ENCODE measurements at regions of chr17 and their contacts with region 1.

Region 1: DNA sequence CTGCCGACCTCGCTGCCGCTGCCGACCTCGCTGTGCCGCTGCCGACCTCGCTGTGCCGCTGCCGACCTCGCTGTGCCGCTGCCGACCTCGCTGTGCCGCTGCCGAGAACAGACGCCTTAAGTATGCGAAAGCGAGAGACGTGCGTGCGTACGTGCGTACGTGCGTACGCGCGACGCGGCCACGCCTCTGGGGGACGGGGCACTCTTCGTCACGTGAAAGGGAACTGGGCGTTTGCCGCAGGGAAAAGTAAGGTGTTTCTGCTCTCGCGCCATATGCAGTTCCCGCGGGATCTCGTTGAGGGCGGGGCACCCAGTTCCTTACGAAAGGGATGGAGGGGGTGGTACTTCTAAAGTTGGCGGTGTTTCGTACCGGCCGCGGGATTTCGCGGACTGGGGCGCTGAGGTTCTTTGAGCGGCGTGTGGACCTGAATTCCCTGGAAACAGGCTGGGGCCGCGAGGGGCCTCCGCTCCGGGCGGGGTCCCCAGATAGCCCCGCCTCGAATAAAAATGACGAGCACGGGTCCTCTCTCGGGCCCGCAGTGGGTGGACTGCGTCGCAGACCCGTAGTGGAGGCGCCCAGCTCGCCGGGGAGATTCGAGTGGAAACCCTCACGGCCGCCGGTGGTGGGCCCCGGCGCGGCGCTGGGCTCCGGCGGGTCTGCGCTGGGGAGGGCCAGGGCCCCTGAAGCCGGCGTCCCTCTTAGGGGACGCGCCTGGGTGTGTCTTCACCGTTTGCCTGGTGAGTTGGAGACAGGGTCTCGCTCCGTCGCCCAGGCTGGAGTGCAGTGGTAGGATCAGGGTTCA is at the start of gene EIF4A3:
- DNase-seq: peak; percentile 99
- CTCF ChIP-seq: peak; percentile 14

Region 2: DNA sequence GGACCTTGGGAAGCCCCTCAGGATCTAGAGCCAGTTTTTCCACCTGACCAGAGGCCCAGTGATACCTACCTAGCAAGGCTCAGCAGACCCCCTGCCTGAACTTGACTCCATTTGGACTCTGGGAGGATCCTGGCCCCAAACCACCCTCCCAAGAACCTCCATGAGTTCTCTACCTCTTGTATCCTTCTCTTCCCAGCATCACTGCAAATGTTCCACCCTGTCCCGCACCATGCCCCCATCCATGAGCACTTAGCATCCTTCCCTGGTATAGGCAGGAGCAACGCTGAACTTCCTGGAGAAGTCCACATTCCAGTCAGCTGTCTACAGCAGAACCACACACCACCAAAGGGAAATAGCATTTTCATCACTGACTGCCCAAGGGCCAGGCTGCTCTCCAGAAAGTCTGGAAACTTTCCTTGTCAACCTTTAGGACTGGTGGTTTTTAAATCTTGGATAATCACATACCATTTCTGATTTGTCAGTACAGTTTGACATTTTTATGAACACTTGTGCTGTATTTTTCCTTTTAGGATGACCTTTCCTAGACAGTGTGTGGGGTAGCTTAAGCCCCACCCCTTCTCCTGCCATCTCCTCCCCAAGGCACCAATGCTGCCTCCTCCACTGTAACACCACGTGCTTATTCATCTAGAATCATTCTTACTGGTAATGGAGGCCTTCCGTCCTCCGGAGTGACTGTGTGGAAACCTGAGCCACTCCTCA is 14.2 kb before region 1 on chr17:
- CTCF ChIA-PET with region 1: interaction called, 3 read pairs
- POLR2A ChIA-PET with region 1: interaction called, 13 read pairs
- DNase-seq: no peak
- CTCF ChIP-seq: no peak

Region 3: DNA sequence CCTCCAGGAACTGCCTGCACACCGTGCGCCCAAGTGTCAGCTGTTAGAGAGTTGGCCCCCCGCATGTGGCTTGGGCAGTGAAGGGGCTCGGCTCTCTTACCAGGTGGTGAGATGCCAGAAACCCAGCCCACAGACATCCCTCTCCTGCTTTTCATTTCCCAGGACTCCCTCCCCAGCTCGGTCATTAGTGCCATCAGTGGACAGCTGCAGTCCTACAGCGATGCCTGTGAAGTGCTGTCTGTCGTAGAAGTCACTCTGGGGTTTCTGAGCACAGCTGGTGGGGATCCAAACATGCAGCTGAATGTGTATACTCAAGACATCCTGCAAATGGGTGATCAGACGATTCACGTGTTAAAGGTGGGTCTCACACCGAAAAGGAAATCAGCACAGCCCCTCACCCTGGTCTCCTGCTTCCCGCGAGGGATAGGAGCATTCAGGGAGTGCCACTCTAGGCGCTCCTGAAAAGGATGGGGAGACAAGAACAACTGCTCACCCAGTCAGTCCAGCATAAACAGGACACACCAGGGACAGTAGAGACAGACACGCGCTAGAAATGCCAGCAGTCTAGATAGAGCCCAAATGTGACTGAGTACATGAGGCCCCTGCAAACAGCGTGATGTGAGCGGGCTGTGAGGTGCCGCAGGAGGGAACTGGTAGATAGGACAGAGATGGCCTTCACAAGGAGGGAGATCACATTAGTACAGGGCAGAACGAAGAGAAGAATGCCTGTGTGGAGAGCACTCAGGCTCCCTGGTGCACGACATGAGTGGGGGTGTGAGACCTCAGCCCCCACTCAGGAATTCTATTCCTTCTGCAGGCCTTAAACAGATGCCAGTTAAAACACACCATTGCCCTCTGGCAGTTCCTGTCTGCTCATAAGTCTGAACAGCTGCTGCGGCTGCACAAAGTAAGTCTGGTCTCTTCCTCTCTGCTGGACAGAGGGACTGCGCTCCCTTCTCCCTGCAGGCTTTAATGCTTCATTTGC is 242.1 kb after region 1 on chr17:
- CTCF ChIA-PET with region 1: no interaction called
- POLR2A ChIA-PET with region 1: no interaction called
- DNase-seq: no peak
- CTCF ChIP-seq: no peak

Region 4: GRCh38 chr17:80477647-80478478 is 330.6 kb after region 1 on chr17:
- CTCF ChIA-PET with region 1: no interaction called
- POLR2A ChIA-PET with region 1: interaction called, 11 read pairs
- DNase-seq: no peak
- CTCF ChIP-seq: peak; percentile 55